PC-3 (cell line): ENCODE measurements at regions of chr7 and their contacts with region 1.

Region 1: DNA sequence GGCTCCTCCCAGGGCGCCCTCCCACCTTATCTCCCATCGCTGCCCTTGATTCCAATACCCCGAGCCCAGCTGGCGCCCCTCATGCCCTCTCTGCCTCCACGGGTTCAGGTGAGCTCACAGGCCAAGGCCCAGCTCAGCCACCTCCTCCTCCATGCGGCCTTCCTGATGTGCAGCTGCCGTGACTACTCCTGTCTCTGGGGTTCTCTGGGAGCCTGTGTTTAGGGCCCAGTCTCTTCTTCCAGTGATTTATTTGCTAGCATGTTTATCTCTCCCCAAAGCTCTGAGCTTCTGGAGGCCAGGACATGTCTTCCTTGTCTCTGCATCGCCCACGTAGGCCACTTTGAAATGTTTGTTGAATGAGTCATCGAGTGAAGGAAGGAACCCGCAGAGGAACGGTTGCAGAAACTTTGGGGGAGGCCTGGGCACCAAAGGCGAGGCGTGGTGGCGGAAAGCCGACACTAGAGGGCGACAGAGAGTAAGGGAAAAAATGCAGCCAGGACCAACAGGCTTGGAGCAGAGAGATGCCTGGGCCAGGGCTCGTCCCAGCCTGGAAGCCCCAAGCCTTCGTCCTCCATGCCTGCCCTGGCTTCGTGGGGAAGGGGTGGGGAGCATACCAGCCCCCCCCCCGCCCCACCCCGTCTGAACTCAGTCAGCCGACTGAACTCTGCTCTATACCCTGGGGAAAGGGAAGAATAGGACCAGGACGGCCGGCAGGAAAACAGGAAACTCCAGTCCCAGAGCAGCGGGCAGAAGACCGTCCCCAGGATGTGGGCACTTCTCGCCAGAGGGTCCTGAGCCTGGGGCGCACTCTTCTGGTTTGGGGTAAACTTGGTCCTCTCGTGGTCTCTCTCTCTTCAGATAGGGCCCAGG is 10.9 kb upstream of the HSPB1 start:
- DNase-seq: peak; percentile 99
- ATAC-seq: peak; percentile 78
- H3K4me3 ChIP-seq: peak overlapping the region; percentile 62; the same call in 1 of the 2 replicates
- H3K27ac ChIP-seq: peak overlapping the region; percentile 89
- H3K4me1 ChIP-seq: peaks cover 34% of the 10 kb centered on the region
- H3K27me3 ChIP-seq: no peaks in the 10 kb centered on the region
- CTCF ChIP-seq: peak; percentile 90

Region 2: DNA sequence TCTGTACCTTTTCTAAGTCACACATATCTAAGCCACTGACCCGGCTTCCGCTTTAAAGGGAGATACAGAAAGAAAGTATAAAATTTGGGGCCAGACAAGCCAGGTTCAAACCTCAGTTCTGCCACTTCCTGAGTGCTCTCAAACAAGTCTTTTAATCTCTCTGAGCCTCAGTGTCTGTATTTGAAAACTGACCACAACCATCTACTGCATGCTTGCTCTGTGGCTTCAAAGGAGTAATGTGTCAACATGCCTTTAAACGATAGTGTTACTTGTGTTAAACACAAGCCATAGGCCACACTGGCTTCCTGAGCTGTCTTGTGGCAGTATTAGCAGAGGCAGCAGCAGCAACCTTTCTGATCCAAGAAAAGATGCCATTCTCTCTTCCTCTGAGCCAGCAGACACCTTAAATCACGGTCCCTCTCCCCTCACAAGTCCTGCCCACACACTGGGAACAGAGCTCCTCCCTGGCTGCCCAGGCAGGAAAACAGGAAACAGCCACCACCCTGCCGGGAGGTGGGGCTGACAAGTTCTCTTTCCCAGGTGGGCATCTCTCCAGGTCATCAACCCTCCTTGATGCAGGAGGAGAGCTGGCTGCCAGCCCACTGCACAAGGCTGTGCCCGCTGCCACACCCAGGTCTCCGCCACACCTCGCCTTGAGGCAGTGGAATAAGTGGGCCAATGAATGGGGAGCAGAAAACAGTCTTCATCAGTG is 563.5 kb before region 1 on chr7:
- CTCF ChIA-PET with region 1: interaction called, 12 read pairs
- POLR2A ChIA-PET with region 1: no interaction called
- intact Hi-C with region 1: no loop called
- DNase-seq: peak; percentile 92
- ATAC-seq: peak; percentile 86
- H3K4me3 ChIP-seq: peak overlapping the region; percentile 14; the same call in 1 of the 2 replicates
- H3K27ac ChIP-seq: peak overlapping the region; percentile 51
- H3K4me1 ChIP-seq: peaks cover 25% of the 10 kb centered on the region
- H3K27me3 ChIP-seq: no peaks in the 10 kb centered on the region
- CTCF ChIP-seq: no peak

Region 3: DNA sequence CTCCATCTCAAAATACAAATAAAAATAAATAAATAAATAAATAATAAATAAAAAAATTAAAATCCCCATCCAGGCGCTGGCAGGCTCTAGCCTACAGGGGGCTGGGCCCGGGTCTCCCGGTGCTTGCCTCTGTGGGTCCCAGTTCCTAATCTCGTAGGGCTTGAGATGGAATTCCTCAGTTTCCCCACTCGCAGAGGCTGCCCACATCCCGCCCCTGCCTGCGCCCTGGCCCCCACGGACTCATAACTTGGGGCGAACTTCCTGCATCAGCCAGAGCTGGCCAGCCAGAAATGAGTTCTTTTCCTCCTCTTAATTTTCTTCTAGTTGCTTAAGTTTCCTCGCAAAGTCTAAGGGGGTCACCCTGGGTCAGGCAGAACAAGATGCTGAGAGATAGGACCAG is 111.9 kb before region 1 on chr7:
- CTCF ChIA-PET with region 1: interaction called, 4 read pairs
- POLR2A ChIA-PET with region 1: no interaction called
- intact Hi-C with region 1: loop called (anchors 1 kb)
- DNase-seq: no peak
- ATAC-seq: no peak
- H3K4me3 ChIP-seq: no peak overlapping the region
- H3K27ac ChIP-seq: no peak overlapping the region
- H3K4me1 ChIP-seq: no peaks in the 10 kb centered on the region
- H3K27me3 ChIP-seq: no peaks in the 10 kb centered on the region
- CTCF ChIP-seq: no peak

Region 4: DNA sequence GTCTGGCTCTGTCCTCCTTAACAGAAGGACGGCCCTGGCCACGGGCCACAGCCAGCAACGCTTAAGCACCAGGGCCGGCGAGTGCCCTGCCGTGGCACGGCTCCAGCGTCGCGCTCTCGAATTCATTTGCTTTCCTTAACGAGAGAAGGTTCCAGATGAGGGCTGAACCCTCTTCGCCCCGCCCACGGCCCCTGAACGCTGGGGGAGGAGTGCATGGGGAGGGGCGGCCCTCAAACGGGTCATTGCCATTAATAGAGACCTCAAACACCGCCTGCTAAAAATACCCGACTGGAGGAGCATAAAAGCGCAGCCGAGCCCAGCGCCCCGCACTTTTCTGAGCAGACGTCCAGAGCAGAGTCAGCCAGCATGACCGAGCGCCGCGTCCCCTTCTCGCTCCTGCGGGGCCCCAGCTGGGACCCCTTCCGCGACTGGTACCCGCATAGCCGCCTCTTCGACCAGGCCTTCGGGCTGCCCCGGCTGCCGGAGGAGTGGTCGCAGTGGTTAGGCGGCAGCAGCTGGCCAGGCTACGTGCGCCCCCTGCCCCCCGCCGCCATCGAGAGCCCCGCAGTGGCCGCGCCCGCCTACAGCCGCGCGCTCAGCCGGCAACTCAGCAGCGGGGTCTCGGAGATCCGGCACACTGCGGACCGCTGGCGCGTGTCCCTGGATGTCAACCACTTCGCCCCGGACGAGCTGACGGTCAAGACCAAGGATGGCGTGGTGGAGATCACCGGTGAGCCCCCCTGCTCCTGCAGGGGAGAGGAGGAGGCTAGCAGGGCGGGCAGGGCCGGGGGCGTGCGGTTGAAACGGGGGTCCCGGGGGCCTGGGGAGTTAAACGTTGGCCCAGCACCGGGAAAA is 11.0 kb after region 1 on chr7 and contains the start of gene HSPB1:
- CTCF ChIA-PET with region 1: interaction called, 17 read pairs
- POLR2A ChIA-PET with region 1: interaction called, 6 read pairs
- intact Hi-C with region 1: loop called (anchors 1 kb)
- DNase-seq: peak; percentile 87
- ATAC-seq: peak; percentile 52
- H3K4me3 ChIP-seq: peak within 1 kb of the TSS; percentile 84
- H3K27ac ChIP-seq: peak within 1 kb of the TSS; percentile 51
- H3K4me1 ChIP-seq: peaks cover 22% of the 10 kb centered on the region
- H3K27me3 ChIP-seq: no peaks in the 10 kb centered on the region
- CTCF ChIP-seq: no peak
- total RNA-seq, gene HSPB1: 166 and 189 TPM in 2 replicates

Region 5: GRCh38 chr7:76314042-76314721 is 22.6 kb after region 1 on chr7:
- CTCF ChIA-PET with region 1: interaction called, 32 read pairs
- POLR2A ChIA-PET with region 1: interaction called, 9 read pairs
- intact Hi-C with region 1: loop called (anchors 1 kb)
- DNase-seq: peak; percentile 91
- ATAC-seq: peak; percentile 51
- H3K4me3 ChIP-seq: no peak overlapping the region
- H3K27ac ChIP-seq: no peak overlapping the region
- H3K4me1 ChIP-seq: peaks cover 12% of the 10 kb centered on the region
- H3K27me3 ChIP-seq: no peaks in the 10 kb centered on the region
- CTCF ChIP-seq: peak; percentile 99